Left lung (tissue), 14 donors: ENCODE measurements at regions of chr10 and their contacts with region 1.

Region 1: GRCh38 chr10:79195091-79195923 is 126.5 kb downstream of the ZMIZ1 start:
- DNase-seq: peak; percentile 73 to 95 (median 86)
- ATAC-seq: peak; percentile 95
- H3K4me3 ChIP-seq: no peak overlapping the region
- H3K27ac ChIP-seq: peak overlapping the region; percentile 4 to 47
- H3K4me1 ChIP-seq: peaks cover 12 to 36% of the 10 kb centered on the region in 2 donors
- H3K27me3 ChIP-seq: no peaks in the 10 kb centered on the region
- CTCF ChIP-seq: peak; percentile 96 to 97

Region 2: DNA sequence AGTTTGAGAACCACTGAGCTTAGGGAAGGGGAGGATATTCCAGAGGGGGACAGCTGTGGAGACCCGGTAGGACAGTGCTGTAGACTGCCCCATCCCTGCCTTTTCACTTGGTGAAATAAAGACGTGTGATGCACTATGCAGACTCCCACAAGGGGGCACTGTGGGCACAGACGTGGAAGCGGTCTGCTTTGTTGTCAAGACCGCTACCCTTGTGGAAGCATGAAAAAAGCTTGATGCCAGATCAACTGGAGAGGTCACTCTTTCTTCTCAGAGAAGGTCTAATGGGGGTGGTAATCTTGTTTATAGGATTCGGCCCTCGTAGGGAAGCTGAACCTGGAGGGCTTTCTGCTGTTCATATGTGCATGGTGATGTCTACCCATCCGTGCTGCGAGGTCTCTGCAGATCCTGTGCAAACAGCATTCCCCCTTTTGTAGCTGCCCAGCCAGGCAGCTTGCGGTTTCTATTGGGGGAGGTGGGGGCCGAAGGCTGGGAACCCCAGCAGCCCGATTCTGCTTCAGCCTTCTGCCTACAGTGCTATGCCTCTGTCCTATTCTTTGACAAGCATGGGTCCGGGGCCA is 1147.9 kb before region 1 on chr10:
- intact Hi-C with region 1: loop called in 1 of 2 experiments (anchors 10 kb)
- DNase-seq: peak; percentile 81 to 90 (median 85)
- ATAC-seq: peak; percentile 95
- H3K4me3 ChIP-seq: no peak overlapping the region
- H3K27ac ChIP-seq: no peak overlapping the region
- H3K4me1 ChIP-seq: peaks cover 3 to 8% of the 10 kb centered on the region in 2 donors
- H3K27me3 ChIP-seq: no peaks in the 10 kb centered on the region
- CTCF ChIP-seq: peak; percentile 76 to 89

Region 3: DNA sequence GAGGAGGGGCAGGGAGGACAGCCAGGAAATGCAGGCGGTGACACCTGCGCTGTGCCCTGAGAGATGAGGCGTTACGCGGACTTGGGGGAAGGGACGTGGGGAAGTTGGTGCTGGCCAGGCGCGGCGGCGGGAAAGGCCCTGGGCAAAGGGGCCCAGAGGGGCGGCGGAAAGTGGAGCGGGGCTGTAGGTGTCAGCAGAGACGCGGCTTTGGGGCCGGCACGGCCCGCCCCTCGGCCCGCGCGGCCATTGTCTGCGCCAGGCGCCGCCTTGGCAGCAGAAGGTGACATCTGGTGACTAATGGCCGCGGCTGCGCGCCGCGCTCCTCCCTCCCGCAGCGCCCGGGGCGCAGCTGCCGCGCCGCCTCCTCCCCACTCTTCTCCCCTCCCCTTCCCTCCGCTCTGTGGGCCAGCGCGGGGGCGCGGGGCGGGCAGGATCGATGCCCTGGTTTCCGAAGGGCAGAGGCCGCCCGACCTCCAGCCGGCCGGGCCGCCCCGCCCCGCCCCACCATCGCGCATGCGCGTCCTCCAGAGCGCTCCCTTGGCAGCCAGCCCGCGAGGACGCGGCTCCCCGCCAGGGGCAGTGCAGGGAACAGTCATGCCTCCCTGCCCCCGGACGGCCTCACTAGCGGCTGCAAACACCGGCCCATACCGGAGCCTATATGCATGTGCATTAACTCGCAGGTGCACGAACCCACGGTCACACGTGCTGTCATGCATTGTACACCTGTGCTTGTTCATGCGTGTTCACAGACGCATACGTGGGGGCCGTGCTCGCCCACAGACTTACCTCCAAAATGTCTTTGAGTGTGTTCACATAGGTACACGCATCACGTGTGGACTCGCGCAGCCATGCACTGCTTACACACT is 892.1 kb before region 1 on chr10:
- intact Hi-C with region 1: loop called in 1 of 2 experiments (anchors 10 kb)
- DNase-seq: peak; percentile 93 to 100 (median 96)
- ATAC-seq: peak; percentile 97
- H3K4me3 ChIP-seq: peak overlapping the region; percentile 43 to 56
- H3K27ac ChIP-seq: peak overlapping the region; percentile 85 to 97
- H3K4me1 ChIP-seq: peaks cover 10 to 21% of the 10 kb centered on the region in 2 donors
- H3K27me3 ChIP-seq: no peaks in the 10 kb centered on the region
- CTCF ChIP-seq: peak; percentile 58 to 91

Region 4: DNA sequence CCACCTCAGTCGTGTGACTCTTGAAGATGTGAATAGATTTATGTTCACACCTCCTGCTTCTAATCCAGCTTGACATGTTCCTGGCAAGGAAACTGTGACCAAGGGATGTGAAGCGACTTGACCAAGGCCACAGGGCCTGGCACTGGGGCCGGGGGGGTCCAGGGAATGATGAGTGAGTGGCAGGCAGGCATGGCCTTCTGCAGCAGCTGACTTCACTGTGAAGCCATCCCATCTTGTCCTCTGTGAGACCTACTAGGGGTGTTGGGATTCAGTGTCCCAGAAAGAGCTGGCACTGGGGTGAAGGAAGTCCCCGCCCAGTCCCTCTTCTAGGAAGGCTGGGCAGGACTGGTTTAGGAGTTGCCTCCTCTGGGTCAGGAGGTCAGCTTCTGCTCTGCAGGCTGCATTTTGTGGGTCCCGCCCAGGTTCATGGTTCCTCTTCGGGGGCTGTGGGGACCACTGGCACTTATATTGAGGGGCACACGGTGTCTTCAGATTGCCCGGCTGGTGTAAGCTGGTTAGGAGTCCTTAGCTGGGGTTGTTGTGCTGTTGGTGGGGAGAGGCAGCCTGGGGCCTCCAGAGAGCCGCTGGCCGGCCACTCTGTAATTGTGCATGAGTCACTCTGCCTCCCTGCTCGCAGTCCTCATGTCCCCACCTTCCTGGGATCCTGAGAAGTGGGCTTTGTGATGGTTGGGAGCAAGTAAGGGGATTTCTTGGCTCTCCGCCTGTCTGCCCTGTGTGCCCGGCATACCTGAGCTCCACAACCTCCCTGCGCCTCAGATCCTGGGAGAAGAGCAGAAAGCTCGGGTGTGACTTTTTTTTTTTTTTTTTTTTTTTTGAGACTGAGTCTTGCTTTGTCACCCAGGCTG is 115.6 kb before region 1 on chr10:
- intact Hi-C with region 1: loop called in 1 of 2 experiments (anchors 5 kb)
- DNase-seq: peak in 2 of 4 donors; percentile 68 to 74
- ATAC-seq: peak; percentile 59
- H3K4me3 ChIP-seq: no peak overlapping the region
- H3K27ac ChIP-seq: peak overlapping the region; percentile 10 to 66
- H3K4me1 ChIP-seq: peaks cover 65 to 100% of the 10 kb centered on the region in 2 donors
- H3K27me3 ChIP-seq: no peaks in the 10 kb centered on the region
- CTCF ChIP-seq: no peak

Region 5: DNA sequence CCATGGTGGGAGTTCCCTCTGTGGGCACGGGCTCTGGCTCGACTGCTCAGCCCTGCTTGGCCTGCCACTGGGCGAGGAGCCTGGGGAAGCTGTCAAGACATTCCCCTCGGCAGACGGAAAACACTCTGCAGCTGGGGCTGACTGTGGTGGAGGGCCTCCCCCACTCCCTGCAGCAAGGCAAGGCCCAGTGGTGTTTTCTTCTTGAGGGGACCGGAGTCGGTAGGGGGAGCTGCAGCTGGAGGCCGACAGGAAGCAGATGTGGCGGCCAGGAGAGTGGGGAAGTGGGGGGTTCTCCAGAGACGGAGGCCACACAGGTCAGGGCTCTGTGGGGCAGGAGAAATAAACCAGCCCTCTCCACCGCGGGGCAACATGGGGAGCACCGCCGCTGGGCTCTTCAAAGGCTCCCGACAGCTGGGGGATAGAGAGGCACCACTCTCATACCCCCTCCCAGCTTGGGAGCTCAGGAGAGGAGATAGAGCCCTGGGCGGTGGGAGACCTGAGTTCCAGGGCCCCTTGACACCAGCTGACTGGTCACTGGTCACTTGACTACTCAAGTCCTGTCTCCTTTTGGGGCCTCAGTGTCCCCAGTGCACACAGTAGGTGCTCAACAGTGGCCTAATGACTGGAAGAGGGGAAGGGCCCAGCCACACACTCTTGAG is 195.4 kb after region 1 on chr10:
- intact Hi-C with region 1: no loop called
- DNase-seq: peak in 3 of 4 donors; percentile 32 to 73 (median 56)
- ATAC-seq: peak; percentile 7
- H3K4me3 ChIP-seq: no peak overlapping the region
- H3K27ac ChIP-seq: no peak overlapping the region
- H3K4me1 ChIP-seq: peaks cover 0 to 3% of the 10 kb centered on the region in 2 donors
- H3K27me3 ChIP-seq: no peaks in the 10 kb centered on the region
- CTCF ChIP-seq: no peak